Left lung (tissue), 14 donors: ENCODE measurements at regions of chr2 and their contacts with region 1.

Region 1: GRCh38 chr2:176126929-176127773 is 2.4 kb upstream of the HOXD8 start:
- DNase-seq: peak in 2 of 4 donors; percentile 52 to 79
- ATAC-seq: peak; percentile 51
- H3K4me3 ChIP-seq: no peak overlapping the region
- H3K27ac ChIP-seq: no peak overlapping the region
- H3K4me1 ChIP-seq: peaks cover 0 to 47% of the 10 kb centered on the region in 2 donors
- H3K27me3 ChIP-seq: peaks cover 96 to 100% of the 10 kb centered on the region in 2 donors
- CTCF ChIP-seq: peak; percentile 68 to 86

Region 2: GRCh38 chr2:176554101-176555048 is 427.2 kb after region 1 on chr2:
- intact Hi-C with region 1: loop called in 1 of 2 experiments (anchors 5 kb)
- DNase-seq: peak in 2 of 4 donors; percentile 81 to 84
- ATAC-seq: peak; percentile 89
- H3K4me3 ChIP-seq: peak overlapping the region; percentile 12 to 28
- H3K27ac ChIP-seq: peak overlapping the region in 1 of 2 donors; percentile 13
- H3K4me1 ChIP-seq: peaks cover 2 to 12% of the 10 kb centered on the region in 2 donors
- H3K27me3 ChIP-seq: peaks cover 14 to 68% of the 10 kb centered on the region in 2 donors
- CTCF ChIP-seq: peak; percentile 55 to 80

Region 3: GRCh38 chr2:176638167-176639015 is 511.2 kb after region 1 on chr2:
- intact Hi-C with region 1: loop called in 1 of 2 experiments (anchors 5 kb)
- DNase-seq: peak; percentile 38 to 82 (median 64)
- ATAC-seq: peak; percentile 98
- H3K4me3 ChIP-seq: peak overlapping the region; percentile 46 to 49
- H3K27ac ChIP-seq: no peak overlapping the region
- H3K4me1 ChIP-seq: peaks cover 0 to 12% of the 10 kb centered on the region in 2 donors
- H3K27me3 ChIP-seq: peaks cover 76 to 100% of the 10 kb centered on the region in 2 donors
- CTCF ChIP-seq: peak; percentile 62 to 75

Region 4: DNA sequence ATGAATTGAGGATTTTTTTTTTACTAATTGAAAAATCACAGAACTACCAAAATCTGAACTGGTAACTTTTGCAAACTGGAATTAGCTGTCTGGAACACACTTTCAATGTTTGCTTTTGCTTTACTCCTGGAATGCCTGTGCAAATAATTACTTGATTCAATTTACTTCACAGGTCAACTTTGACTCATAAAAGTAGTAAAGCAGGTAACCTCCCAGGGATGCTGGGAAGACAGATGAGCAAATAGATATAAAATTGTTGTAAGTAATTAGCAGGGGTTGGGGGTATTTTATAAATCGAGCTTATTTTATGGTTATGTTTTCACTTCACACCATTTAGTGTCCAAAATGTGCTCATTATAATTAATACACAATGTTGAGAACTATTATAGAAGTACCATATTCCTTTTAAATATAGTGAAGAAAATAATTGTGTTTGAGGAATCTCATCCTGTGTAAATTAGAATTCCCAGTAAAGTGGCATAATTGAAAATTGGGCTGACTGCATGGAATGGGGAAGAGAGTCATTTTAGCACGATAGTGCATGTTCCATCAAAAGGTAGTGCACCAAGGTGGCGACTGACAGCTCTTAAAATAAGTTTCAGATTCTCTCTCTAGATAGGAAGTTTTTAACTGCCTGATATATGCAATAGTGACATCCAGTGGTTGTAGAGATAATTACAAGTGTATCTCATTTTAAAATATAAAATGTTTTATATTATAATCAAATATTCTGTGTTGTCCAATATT is 687.3 kb after region 1 on chr2:
- intact Hi-C with region 1: loop called in 1 of 2 experiments (anchors 10 kb)
- DNase-seq: no peak
- ATAC-seq: peak; percentile 88
- H3K4me3 ChIP-seq: no peak overlapping the region
- H3K27ac ChIP-seq: no peak overlapping the region
- H3K4me1 ChIP-seq: no peaks in the 10 kb centered on the region
- H3K27me3 ChIP-seq: no peaks in the 10 kb centered on the region
- CTCF ChIP-seq: peak; percentile 28 to 54

Region 5: GRCh38 chr2:177148477-177149154 is 1021.5 kb after region 1 on chr2:
- intact Hi-C with region 1: loop called in 1 of 2 experiments (anchors 5 kb)
- DNase-seq: peak; percentile 72 to 86 (median 77)
- ATAC-seq: peak; percentile 98
- H3K4me3 ChIP-seq: peak overlapping the region in 1 of 2 donors; percentile 41
- H3K27ac ChIP-seq: no peak overlapping the region
- H3K4me1 ChIP-seq: peaks cover 2 to 15% of the 10 kb centered on the region in 2 donors
- H3K27me3 ChIP-seq: peaks cover 30 to 68% of the 10 kb centered on the region in 2 donors
- CTCF ChIP-seq: peak; percentile 70 to 78